Activated CD4-positive, alpha-beta T cell treated with anti-CD3 and anti-CD28 coated beads, Interleukin-2, amount 10 ng/mL, durations not matched to agents 24 days and 14 days (primary cell): ENCODE measurements at regions of chr9 and their contacts with region 1.

Region 1: DNA sequence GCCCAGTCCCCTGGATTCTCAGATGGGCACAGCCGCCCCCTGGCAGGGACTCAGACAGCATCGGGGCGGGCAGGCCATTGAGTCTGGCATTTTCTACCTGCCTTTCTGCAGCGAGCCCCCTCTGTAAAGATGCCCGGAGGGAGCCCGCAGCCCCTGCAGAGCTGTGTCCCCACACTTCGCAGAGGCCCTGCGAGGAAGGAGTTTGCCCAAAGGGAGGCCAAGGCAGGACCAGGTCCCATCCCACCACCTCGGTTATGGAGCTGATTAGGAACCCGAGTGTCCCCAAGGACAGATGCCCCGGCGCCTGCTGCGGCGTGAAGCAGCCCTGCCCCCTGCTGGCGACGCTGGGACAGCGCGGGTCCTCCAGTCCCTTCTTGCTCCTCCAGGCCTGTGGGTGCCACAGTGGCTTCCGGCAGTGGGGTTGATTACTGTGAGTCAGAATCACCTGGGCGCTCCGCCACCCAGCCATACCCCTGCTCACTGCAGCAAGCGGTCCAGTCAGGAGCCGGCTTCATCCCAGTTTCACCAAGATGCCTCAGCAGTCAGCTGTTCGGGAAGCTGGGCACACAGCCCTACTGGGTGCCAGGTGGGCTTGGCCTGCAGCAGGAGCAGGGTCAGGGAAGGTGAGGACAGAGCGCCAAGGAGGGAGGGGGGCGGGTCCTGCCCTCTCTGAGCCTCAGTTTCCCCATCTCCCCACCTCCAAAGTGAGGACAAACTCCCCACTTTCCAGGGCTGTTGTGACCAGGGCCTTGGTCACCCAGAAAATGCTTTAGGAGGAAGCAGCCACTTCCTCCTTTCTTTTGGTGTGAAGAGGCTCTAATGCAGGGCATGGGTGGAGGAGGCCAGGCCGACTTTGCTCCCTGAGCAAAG is 117.1 kb downstream of the RXRA start:
- DNase-seq: peak; percentile 95
- H3K4me3 Mint-ChIP-seq: no peak overlapping the region
- H3K27ac Mint-ChIP-seq: no peak overlapping the region
- H3K4me1 Mint-ChIP-seq: peaks cover 6% of the 10 kb centered on the region
- H3K27me3 Mint-ChIP-seq: peaks cover 10% of the 10 kb centered on the region

Region 2: DNA sequence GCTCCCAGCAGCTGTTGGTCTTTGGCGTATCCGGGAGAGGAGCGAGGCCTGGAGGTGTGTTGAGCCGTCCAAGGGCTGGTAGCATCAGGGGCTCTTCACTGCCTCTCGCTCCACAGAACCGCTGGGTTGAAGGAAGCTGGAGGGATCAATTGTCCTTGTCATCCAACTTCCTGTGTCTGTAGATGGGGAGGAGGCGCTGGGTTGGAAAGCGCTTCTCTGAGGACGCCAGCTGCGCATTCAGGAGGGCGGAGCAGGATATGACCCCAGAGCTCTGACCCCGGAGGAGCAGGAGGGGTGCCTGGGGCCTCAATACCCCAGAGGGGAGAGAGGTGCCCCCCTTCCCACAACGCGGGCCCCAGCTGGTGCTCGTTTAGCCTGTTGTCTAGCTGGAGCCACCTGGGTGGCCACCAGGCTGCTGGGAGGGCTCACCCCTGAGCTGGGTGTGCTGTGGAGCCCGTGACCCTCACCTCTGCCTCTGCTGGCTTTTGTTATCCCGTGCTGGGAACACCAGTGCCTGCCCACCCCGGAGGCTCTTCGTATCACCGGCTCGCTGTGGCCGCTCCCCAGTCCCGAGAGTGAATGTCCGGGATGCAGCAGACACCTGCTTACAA is 809.2 kb before region 1 on chr9:
- intact Hi-C with region 1: no loop called
- DNase-seq: no peak
- H3K4me3 Mint-ChIP-seq: no peak overlapping the region
- H3K27ac Mint-ChIP-seq: no peak overlapping the region
- H3K4me1 Mint-ChIP-seq: no peaks in the 10 kb centered on the region
- H3K27me3 Mint-ChIP-seq: no peaks in the 10 kb centered on the region

Region 3: GRCh38 chr9:134170532-134171315 is 272.7 kb before region 1 on chr9:
- intact Hi-C with region 1: loop called (anchors 1 kb)
- DNase-seq: peak; percentile 69
- H3K4me3 Mint-ChIP-seq: no peak overlapping the region
- H3K27ac Mint-ChIP-seq: no peak overlapping the region
- H3K4me1 Mint-ChIP-seq: peaks cover 5% of the 10 kb centered on the region
- H3K27me3 Mint-ChIP-seq: peaks cover 2% of the 10 kb centered on the region

Region 4: GRCh38 chr9:134365791-134366688 is 77.4 kb before region 1 on chr9:
- intact Hi-C with region 1: loop called (anchors 2 kb)
- DNase-seq: no peak
- H3K4me3 Mint-ChIP-seq: no peak overlapping the region
- H3K27ac Mint-ChIP-seq: no peak overlapping the region
- H3K4me1 Mint-ChIP-seq: no peaks in the 10 kb centered on the region
- H3K27me3 Mint-ChIP-seq: no peaks in the 10 kb centered on the region

Region 5: GRCh38 chr9:134407123-134407808 is 36.1 kb before region 1 on chr9:
- intact Hi-C with region 1: loop called (anchors 1 kb)
- DNase-seq: peak; percentile 94
- H3K4me3 Mint-ChIP-seq: peak overlapping the region; percentile 72
- H3K27ac Mint-ChIP-seq: peak overlapping the region; percentile 54
- H3K4me1 Mint-ChIP-seq: peaks cover 25% of the 10 kb centered on the region
- H3K27me3 Mint-ChIP-seq: peaks cover 18% of the 10 kb centered on the region

Region 6: GRCh38 chr9:134751622-134752021 is 308.2 kb after region 1 on chr9:
- intact Hi-C with region 1: no loop called
- DNase-seq: no peak
- H3K4me3 Mint-ChIP-seq: no peak overlapping the region
- H3K27ac Mint-ChIP-seq: no peak overlapping the region
- H3K4me1 Mint-ChIP-seq: no peaks in the 10 kb centered on the region
- H3K27me3 Mint-ChIP-seq: no peaks in the 10 kb centered on the region